GM13976 (cell line): ENCODE measurements at regions of chr2 and their contacts with region 1.

Region 1: GRCh38 chr2:240056678-240057077 is 3.4 kb upstream of the OR6B3 start:
- DNase-seq: no peak
- CTCF ChIP-seq: no peak

Region 2: GRCh38 chr2:239660390-239661230 is 396.1 kb before region 1 on chr2:
- in situ Hi-C with region 1: no loop called
- DNase-seq: no peak
- CTCF ChIP-seq: no peak

Region 3: DNA sequence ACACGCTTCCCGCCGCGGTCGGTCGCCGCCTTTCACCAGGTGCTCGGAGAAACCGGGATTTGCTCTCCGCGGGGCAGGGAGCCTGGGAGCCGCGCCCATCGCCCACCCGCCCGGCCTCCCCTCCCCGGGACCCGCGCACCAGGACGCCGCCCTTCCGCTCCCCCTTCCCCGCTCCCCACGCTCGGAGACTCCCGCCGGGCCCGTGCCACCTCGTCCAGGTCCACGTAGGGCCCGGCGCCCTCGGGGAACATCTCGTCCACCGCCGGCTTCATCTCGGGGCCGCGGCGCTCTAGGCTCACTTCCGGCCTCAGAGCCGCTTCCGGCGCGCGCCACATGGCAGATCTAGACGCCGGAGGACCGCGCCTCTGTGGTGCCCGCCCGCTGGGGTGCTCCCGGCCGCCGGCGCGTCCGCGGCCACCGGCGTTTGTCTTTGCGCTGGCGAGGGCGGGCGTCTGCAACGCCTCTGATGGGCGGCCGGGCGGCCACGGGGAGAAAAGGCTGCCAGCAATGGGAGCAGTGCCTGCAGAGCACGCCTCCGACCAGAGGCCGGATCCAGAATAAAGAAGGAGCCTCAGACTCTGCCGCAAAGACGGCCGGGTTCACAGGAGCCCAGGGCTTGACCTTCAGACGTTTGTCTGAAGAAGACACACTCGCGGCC is 79.5 kb after region 1 on chr2 and contains the start of gene COPS9:
- in situ Hi-C with region 1: loop called (anchors 5 kb)
- DNase-seq: peak; percentile 97
- CTCF ChIP-seq: no peak